ENCODE measurements at regions of chr9 and their contacts with region 1.

Region 1: GRCh38 chr9:75185585-75186170 is 97.4 kb downstream of the OSTF1 start:
- DNase-seq: peak; percentile 28 to 38 (median 34)
- H3K4me3 ChIP-seq: no peak overlapping the region
- H3K4me3 Mint-ChIP-seq: no peak overlapping the region
- H3K27ac ChIP-seq: no peak overlapping the region
- H3K27ac Mint-ChIP-seq: peak overlapping the region in 3 of 7 donors; percentile 9 to 39 (median 36)
- H3K4me1 ChIP-seq: peaks cover 15% of the 10 kb centered on the region
- H3K4me1 Mint-ChIP-seq: peaks cover 14 to 23% (median 18%) of the 10 kb centered on the region in 4 donors
- H3K27me3 ChIP-seq: no peaks in the 10 kb centered on the region
- H3K27me3 Mint-ChIP-seq: no peaks in the 10 kb centered on the region

Region 2: GRCh38 chr9:74773886-74774479 is 411.7 kb before region 1 on chr9:
- CTCF ChIA-PET with region 1: interaction called, 3 read pairs
- POLR2A ChIA-PET with region 1: no interaction called
- intact Hi-C with region 1: loop called (anchors 5 kb)
- DNase-seq: peak; percentile 61 to 66 (median 61)
- H3K4me3 ChIP-seq: no peak overlapping the region
- H3K4me3 Mint-ChIP-seq: no peak overlapping the region
- H3K27ac ChIP-seq: no peak overlapping the region
- H3K27ac Mint-ChIP-seq: no peak overlapping the region
- H3K4me1 ChIP-seq: no peaks in the 10 kb centered on the region
- H3K4me1 Mint-ChIP-seq: peaks cover 0 to 3% (median 2%) of the 10 kb centered on the region in 4 donors
- H3K27me3 ChIP-seq: no peaks in the 10 kb centered on the region
- H3K27me3 Mint-ChIP-seq: peaks cover 14 to 19% of the 10 kb centered on the region in 2 donors

Region 3: GRCh38 chr9:75071530-75072124 is 114.1 kb before region 1 on chr9:
- CTCF ChIA-PET with region 1: interaction called, 10 read pairs
- POLR2A ChIA-PET with region 1: no interaction called
- intact Hi-C with region 1: no loop called
- DNase-seq: peak; percentile 35 to 88 (median 42)
- H3K4me3 ChIP-seq: no peak overlapping the region
- H3K4me3 Mint-ChIP-seq: peak overlapping the region in 1 of 8 donors; percentile 23
- H3K27ac ChIP-seq: no peak overlapping the region
- H3K27ac Mint-ChIP-seq: peak overlapping the region; percentile 29 to 87 (median 57)
- H3K4me1 ChIP-seq: peaks cover 13% of the 10 kb centered on the region
- H3K4me1 Mint-ChIP-seq: peaks cover 12 to 30% (median 15%) of the 10 kb centered on the region in 4 donors
- H3K27me3 ChIP-seq: no peaks in the 10 kb centered on the region
- H3K27me3 Mint-ChIP-seq: no peaks in the 10 kb centered on the region

Region 4: DNA sequence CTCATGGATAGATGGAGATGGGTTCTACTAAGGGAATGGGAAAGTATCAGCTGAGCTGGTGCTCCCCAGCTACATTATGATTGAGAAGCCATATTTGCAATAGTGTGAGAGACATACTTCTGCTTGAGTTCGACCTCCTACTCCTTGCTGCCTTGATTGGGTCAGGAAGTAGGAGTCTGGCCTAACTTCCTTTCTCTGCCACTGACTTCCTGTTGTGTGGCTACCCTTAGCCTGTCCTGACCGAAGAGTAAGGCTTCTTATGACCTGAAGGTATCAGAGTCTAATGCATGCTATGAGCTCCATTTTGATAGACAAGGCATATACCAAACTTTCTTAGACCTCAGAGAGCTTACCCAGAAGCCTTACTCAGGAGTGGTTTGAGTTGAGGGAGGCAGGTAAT is 43.5 kb before region 1 on chr9:
- CTCF ChIA-PET with region 1: interaction called, 29 read pairs
- POLR2A ChIA-PET with region 1: interaction called, 6 read pairs
- intact Hi-C with region 1: no loop called
- DNase-seq: no peak
- H3K4me3 ChIP-seq: no peak overlapping the region
- H3K4me3 Mint-ChIP-seq: peak overlapping the region in 7 of 8 donors; percentile 19 to 80 (median 66)
- H3K27ac ChIP-seq: no peak overlapping the region
- H3K27ac Mint-ChIP-seq: peak overlapping the region; percentile 75 to 90 (median 79)
- H3K4me1 ChIP-seq: peaks cover 84% of the 10 kb centered on the region
- H3K4me1 Mint-ChIP-seq: peaks cover 50 to 86% (median 67%) of the 10 kb centered on the region in 4 donors
- H3K27me3 ChIP-seq: no peaks in the 10 kb centered on the region
- H3K27me3 Mint-ChIP-seq: no peaks in the 10 kb centered on the region

Region 5: GRCh38 chr9:75170898-75171360 is 14.7 kb before region 1 on chr9:
- CTCF ChIA-PET with region 1: interaction called, 41 read pairs
- POLR2A ChIA-PET with region 1: no interaction called
- intact Hi-C with region 1: no loop called
- DNase-seq: no peak
- H3K4me3 ChIP-seq: no peak overlapping the region
- H3K4me3 Mint-ChIP-seq: no peak overlapping the region
- H3K27ac ChIP-seq: no peak overlapping the region
- H3K27ac Mint-ChIP-seq: no peak overlapping the region
- H3K4me1 ChIP-seq: peaks cover 14% of the 10 kb centered on the region
- H3K4me1 Mint-ChIP-seq: peaks cover 17 to 26% (median 17%) of the 10 kb centered on the region in 4 donors
- H3K27me3 ChIP-seq: no peaks in the 10 kb centered on the region
- H3K27me3 Mint-ChIP-seq: no peaks in the 10 kb centered on the region

Region 6: GRCh38 chr9:75238311-75238978 is 52.8 kb after region 1 on chr9:
- CTCF ChIA-PET with region 1: interaction called, 6 read pairs
- POLR2A ChIA-PET with region 1: no interaction called
- intact Hi-C with region 1: loop called (anchors 1 kb)
- DNase-seq: peak; percentile 45 to 66 (median 49)
- H3K4me3 ChIP-seq: no peak overlapping the region
- H3K4me3 Mint-ChIP-seq: no peak overlapping the region
- H3K27ac ChIP-seq: no peak overlapping the region
- H3K27ac Mint-ChIP-seq: peak overlapping the region in 1 of 7 donors; percentile 25
- H3K4me1 ChIP-seq: no peaks in the 10 kb centered on the region
- H3K4me1 Mint-ChIP-seq: no peaks in the 10 kb centered on the region
- H3K27me3 ChIP-seq: no peaks in the 10 kb centered on the region
- H3K27me3 Mint-ChIP-seq: no peaks in the 10 kb centered on the region